Head of caudate nucleus (tissue), 42 donors: ENCODE measurements at regions of chr5 and their contacts with region 1.

Region 1: DNA sequence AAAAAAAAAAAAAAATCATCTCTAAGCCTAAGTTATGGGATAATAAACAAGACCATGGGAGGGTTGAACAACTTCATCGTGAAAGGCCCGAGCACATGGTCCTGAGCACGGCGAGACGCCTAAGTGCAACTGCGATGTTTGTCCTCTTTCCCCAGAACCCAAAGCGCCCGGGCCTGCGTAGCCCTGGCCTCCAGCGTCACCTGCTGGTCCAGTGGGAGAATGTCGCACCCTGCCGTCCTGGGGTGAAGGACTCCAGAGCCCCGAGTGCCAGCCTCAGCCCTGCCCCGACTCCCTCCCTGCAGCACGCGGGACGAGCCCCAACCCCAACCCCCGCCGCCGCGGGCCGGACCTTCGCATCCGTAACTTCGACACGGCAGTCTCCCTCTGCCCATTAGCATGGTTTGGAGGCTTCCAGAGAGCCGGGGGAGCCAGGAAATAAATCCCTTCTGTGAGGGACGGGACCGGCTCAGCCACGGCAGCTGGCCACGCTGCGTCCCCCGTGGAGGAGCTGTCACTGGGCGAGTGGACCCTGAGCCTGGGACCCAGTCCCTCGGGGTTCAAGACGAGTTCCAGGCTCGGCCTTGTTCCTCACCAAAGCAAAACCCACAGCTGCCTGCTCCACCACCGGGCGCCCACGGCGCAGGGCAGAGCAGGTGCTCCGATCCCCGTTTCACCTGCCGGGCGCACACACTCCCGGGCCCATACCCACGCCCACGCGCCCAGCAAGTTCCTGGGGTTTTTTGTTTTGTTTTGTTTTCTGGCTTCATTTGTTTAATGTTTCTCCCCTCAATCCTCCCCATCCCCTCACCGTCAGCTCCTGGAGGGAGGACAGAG is 132.5 kb upstream of the HAND1 start:
- DNase-seq: peak; percentile 32 to 89 (median 72)

Region 2: DNA sequence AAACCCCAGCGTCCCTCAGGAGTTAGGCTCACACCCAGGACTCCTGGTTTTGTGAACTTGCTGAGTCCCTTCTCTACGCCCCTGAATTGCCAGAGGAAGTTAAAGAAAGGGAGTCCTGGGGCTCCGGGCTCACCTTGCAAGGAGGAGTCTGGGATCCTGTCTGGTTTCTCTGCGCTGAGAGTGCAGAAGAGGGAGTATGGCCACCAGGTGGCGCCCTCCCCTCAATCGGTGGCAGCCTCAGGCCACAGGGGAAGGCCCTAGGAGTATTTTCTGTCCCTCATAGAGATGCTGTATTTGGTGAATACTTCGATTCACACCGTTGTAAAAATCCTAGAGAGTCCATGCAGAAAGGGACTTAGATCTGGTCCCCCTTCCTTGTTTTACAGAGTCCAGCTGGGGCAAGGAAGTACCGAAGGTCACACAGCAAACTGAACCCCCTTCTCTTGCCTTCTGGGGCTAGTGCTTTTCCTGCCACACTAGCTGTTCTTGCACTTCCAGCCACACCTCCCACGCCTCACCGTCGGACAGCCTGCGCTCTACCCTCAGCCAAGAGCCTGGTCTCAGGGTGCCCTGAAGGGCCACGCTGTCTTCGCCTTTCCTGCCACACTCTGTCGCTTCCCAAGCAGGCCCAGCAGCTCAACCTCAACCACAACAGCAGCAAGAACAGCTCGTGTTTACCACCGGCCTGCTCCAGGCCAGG is 142.7 kb before region 1 on chr5:
- intact Hi-C with region 1: loop called (anchors 5 kb)
- DNase-seq: peak; percentile 55 to 92 (median 83)

Region 3: DNA sequence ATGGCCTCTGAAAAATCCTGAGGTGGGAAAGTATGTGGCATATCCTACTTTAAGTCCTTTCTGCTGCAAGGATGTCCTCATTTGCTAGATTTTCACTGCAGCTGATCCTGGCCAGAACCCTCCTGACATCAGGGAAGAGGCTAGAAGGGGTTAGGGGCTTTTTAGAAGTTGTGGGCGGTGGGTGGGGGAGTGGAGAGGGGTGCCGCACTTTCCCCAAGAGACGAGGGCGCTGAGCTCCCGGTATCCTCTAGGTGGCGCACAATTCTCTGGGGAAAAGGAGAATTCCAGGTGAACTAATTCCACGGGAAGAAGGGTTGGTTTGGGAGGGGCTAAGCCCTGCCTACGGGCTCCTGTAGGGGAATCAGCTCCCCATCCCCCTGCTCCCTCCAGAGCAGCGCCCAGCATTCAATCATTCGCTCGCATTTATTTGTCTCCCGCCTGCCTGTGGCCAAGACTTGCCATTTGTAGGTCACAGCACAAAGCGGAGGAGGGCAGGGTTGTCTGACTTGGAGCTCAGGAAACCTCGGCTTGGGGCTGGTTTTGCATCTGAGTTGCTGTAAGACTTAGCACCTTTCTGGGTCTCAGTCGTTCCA is 89.6 kb before region 1 on chr5:
- intact Hi-C with region 1: no loop called
- DNase-seq: peak in 41 of 42 donors; percentile 14 to 76 (median 46)